RWPE1 (cell line): ENCODE measurements at regions of chr1 and their contacts with region 1.

Region 1: GRCh38 chr1:193019442-193020026 is 39.6 kb downstream of the UCHL5 start:
- DNase-seq: peak; percentile 44
- H3K27ac ChIP-seq: no peak overlapping the region
- CTCF ChIP-seq: peak; percentile 57

Region 2: DNA sequence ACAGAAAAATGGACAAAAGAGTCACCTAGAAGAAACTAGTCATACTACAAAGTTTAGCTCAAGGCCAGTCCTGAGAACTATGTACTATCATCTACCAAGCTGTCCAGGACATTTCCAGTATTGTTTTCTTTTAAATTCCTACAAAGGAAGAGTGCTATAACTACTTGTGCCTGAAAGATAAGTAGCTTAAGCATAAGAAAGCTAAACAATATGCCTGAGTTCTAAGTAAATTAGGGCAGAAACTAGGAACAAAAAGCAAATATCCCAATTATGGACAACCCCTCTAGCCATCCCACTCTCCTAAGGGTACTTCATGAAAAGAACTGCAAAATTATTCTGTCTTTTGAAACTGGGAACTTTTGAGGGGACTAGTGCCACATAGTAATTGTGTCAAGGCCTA is 216.0 kb before region 1 on chr1:
- CTCF ChIA-PET with region 1: interaction called, 28 read pairs
- POLR2A ChIA-PET with region 1: no interaction called
- DNase-seq: no peak
- H3K27ac ChIP-seq: no peak overlapping the region
- CTCF ChIP-seq: no peak

Region 3: DNA sequence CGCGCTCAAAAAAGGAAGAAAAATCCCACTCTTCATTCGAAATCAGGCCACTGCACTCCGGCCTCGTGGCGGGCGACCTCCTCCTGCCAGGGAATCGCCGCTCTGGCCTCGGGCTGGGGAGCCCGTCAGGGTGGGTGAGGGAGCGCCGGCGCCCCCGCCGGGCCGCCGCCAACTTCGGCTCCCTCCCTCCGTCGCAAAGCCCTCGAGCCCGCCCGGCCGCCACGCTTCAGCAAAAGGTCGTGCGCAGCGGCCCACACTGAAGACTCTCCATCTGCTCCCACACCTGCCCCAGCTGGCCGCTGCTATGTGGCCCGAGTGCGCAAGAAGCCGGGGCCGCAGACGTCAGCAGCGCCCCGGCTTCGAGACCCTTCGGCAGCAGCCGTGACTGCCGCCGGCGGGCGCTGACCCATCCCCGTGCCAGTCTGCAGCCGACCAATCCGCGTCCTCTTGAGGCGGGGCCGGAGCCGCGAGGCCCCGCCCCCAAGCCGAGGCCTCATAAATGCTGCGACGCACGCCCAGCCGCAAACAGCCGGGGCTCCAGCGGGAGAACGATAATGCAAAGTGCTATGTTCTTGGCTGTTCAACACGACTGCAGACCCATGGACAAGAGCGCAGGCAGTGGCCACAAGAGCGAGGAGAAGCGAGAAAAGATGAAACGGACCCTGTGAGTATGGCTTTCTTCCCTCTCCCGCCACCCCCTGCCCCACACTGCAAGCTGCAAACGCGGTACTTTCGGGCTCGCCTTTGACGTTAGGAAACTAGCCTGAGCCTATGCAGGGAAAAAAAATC is 210.8 kb before region 1 on chr1 and contains the start of gene RGS2:
- CTCF ChIA-PET with region 1: interaction called, 28 read pairs
- POLR2A ChIA-PET with region 1: no interaction called
- DNase-seq: peak; percentile 96
- H3K27ac ChIP-seq: peak within 1 kb of the TSS; percentile 64
- CTCF ChIP-seq: no peak

Region 4: GRCh38 chr1:193030280-193030679 is 10.7 kb after region 1 on chr1:
- CTCF ChIA-PET with region 1: interaction called, 13 read pairs
- POLR2A ChIA-PET with region 1: no interaction called
- DNase-seq: no peak
- H3K27ac ChIP-seq: no peak overlapping the region
- CTCF ChIP-seq: no peak